IMR-90 (cell line): ENCODE measurements at regions of chr1 and their contacts with region 1.

Region 1: GRCh38 chr1:219289171-219289570 is 115.5 kb downstream of the LYPLAL1 start:
- DNase-seq: no peak
- ATAC-seq: no peak
- H3K4me3 ChIP-seq: no peak overlapping the region
- H3K27ac ChIP-seq: no peak overlapping the region
- H3K4me1 ChIP-seq: no peaks in the 10 kb centered on the region; the same call in 1 of the 2 replicates
- H3K27me3 ChIP-seq: no peaks in the 10 kb centered on the region
- CTCF ChIP-seq: no peak
- POLR2A ChIP-seq: no peak
- RAD21 ChIP-seq: no peak

Region 2: DNA sequence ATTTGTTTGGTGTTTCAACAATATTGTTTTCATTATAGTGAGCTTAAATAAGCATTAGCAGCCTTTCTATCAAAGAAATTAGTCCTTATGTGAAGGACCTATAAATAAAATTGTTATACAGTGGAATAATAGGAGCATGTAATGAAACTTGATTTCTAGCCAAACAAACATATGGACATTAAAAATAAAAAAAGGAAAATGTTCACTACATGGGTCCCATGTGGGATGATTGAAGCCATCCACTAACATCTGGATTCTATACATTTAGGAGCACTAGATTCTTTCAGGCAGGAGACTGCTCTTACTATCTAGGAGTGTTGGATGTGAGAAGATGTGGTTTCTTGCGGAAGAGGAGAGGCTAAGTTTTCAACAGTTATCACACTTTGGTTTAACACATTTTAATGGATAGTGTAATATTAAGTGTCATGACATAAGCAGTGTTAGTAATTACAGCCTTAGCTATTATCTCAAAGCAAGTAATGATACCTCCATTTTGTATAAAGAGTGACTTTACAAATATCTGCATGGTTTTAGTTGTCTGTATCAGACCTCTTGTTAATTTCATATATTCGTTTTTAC is 53.2 kb before region 1 on chr1:
- CTCF ChIA-PET with region 1: no interaction called
- POLR2A ChIA-PET with region 1: no interaction called
- dilution Hi-C with region 1: no loop called
- in situ Hi-C with region 1: no loop called
- intact Hi-C with region 1: loop called (anchors 5 kb)
- DNase-seq: no peak
- ATAC-seq: no peak
- H3K4me3 ChIP-seq: no peak overlapping the region
- H3K27ac ChIP-seq: no peak overlapping the region
- H3K4me1 ChIP-seq: no peaks in the 10 kb centered on the region
- H3K27me3 ChIP-seq: no peaks in the 10 kb centered on the region
- CTCF ChIP-seq: no peak
- POLR2A ChIP-seq: no peak
- RAD21 ChIP-seq: no peak